ENCODE measurements at regions of chr9 and their contacts with region 1.

Region 1: GRCh38 chr9:90925581-90926257 is 124.1 kb downstream of the SYK start:
- DNase-seq: no peak
- ATAC-seq: no peak
- H3K4me3 Mint-ChIP-seq: no peak overlapping the region
- H3K27ac Mint-ChIP-seq: no peak overlapping the region
- H3K4me1 Mint-ChIP-seq: no peaks in the 10 kb centered on the region
- H3K27me3 Mint-ChIP-seq: peaks cover 16% of the 10 kb centered on the region
- CTCF ChIP-seq: no peak

Region 2: DNA sequence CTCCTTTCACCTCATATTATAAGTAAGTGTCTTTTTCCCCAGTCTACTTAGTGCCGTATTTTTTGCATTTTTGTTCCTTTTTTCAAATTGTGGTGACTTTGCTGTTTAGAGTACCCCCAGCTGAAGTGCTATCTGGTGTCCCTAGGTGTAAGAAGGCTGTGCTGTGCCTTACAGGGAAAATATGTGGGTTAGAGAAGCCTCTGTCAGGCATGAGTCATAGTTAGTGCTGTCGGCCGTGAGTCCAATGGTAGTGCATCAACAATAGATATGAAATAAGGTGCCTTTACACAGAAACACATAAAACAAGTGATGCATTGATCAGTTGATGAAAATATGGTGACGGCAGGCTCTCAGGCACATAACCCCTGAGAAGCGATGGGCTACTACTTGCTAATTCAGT is 104.0 kb before region 1 on chr9:
- CTCF ChIA-PET with region 1: no interaction called
- POLR2A ChIA-PET with region 1: no interaction called
- intact Hi-C with region 1: no loop called
- DNase-seq: no peak
- ATAC-seq: no peak
- H3K4me3 Mint-ChIP-seq: no peak overlapping the region
- H3K27ac Mint-ChIP-seq: no peak overlapping the region
- H3K4me1 Mint-ChIP-seq: no peaks in the 10 kb centered on the region
- H3K27me3 Mint-ChIP-seq: peaks cover 6% of the 10 kb centered on the region
- CTCF ChIP-seq: no peak

Region 3: DNA sequence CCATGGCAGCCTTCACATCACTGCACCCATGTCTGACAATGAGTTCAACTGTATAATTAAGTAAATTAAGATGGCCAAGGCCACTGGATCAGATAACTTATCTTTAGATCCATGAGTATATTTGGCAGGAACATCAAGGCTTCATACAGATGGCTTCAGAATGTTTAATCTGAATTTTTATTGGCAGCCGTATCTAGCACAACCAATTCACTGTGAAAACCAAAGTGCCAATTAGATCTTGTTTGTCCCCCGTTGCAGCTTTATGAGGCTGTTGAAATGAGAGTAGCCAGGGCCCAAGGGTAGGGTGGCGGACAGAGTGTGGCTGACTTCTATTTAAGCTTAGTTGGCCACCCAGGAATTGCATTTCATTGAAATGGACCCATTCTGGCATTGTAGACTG is 13.6 kb after region 1 on chr9:
- CTCF ChIA-PET with region 1: no interaction called
- POLR2A ChIA-PET with region 1: no interaction called
- intact Hi-C with region 1: loop called (anchors 2 kb)
- DNase-seq: no peak
- ATAC-seq: no peak
- H3K4me3 Mint-ChIP-seq: no peak overlapping the region
- H3K27ac Mint-ChIP-seq: no peak overlapping the region
- H3K4me1 Mint-ChIP-seq: peaks cover 15% of the 10 kb centered on the region
- H3K27me3 Mint-ChIP-seq: peaks cover 28% of the 10 kb centered on the region
- CTCF ChIP-seq: no peak